CD14-positive monocyte (primary cell): ENCODE measurements at regions of chr14 and their contacts with region 1.

Region 1: DNA sequence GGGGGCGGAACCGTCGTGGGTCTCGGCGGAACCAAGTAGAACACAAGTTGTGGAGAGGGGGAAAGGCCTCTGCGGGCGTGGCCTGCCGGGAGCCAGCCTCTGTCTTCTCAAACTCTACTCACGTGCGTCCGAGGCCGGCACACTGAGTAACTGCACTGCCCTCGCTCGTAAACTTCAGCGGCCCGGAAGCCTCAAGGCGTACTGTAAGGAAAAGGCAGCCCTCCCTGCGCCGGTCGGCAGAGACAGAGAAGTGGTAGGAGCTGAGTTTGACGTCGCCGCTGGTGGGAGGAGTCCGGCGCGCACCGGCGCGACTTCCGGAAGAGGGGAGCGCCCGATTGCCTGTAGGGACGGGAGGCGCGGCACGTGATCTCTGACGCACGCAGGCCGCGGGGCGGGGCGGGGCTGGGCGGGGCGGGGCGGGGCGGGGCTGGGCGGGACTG is at the start of gene FBXO33:
- DNase-seq: peak; percentile 92 to 98 (median 97)
- H3K4me3 ChIP-seq: peak within 1 kb of the TSS; percentile 88 to 98 (median 96)
- H3K4me3 Mint-ChIP-seq: peak within 1 kb of the TSS; percentile 98 to 99
- H3K27ac ChIP-seq: peak within 1 kb of the TSS; percentile 96 to 100
- H3K27ac Mint-ChIP-seq: peak within 1 kb of the TSS; percentile 100
- H3K4me1 ChIP-seq: peaks cover 27 to 36% of the 10 kb centered on the region in 2 donors
- H3K4me1 Mint-ChIP-seq: peaks cover 45% of the 10 kb centered on the region
- H3K27me3 ChIP-seq: no peaks in the 10 kb centered on the region
- H3K27me3 Mint-ChIP-seq: peaks cover 0 to 1% (median 0%) of the 10 kb centered on the region in 3 donors
- CTCF ChIP-seq: no peak
- polyA plus RNA-seq, gene FBXO33: 9.0 to 14.8 (median 14.1) TPM

Region 2: GRCh38 chr14:39015360-39015961 is 416.7 kb before region 1 on chr14:
- intact Hi-C with region 1: no loop called
- DNase-seq: peak in 2 of 3 donors; percentile 29 to 34
- H3K4me3 ChIP-seq: no peak overlapping the region
- H3K4me3 Mint-ChIP-seq: no peak overlapping the region
- H3K27ac ChIP-seq: no peak overlapping the region
- H3K27ac Mint-ChIP-seq: no peak overlapping the region
- H3K4me1 ChIP-seq: no peaks in the 10 kb centered on the region
- H3K4me1 Mint-ChIP-seq: peaks cover 12% of the 10 kb centered on the region
- H3K27me3 ChIP-seq: no peaks in the 10 kb centered on the region
- H3K27me3 Mint-ChIP-seq: peaks cover 0 to 4% (median 0%) of the 10 kb centered on the region in 3 donors
- CTCF ChIP-seq: peak; percentile 89

Region 3: DNA sequence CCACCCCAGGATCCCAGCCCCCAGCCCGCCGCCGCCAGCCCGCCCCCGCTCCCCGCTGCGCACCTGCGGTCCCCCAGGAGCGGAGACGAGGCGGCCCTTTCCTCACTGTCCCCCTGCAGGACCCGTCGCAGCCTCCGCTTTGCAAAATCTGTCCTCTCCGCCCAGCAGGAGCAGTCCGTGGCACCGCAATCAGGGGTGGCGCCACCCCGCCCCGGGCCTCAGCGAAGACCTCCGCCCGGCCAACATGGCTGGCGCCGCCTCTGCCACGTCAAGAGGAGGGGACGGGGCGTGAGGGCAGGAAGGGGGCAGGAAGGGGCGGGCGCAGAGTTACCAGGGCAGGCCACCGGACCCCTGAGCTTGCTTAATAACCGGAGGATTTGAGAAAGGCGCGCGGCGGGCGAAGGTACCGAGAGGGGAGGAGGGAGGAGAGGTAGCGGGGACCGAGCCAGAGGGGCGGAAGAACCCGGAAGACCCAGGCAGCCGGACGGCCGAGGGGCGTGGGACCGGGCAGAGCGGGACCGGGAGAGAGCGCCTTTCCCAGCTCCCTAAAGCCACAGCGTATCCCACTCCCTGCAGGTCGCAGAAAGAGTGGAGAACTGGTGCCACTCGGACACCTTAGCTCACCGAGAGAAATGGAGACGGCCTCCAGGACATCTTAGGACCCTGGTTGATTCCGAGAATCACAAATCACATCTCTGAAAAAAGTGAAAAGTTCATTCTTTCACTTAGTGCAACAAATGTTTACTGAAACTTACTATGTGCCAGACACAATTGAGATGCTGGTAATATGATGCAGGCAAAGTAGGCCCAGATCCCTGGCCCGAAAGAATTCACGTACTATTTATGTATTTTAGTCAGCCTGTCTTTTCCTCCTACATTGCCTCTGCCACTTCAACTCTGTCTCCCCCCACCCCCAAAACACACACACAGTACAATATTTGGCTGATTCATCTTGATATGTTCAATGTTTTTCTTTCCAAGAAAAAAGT is 328.9 kb before region 1 on chr14 and contains the start of gene SEC23A:
- intact Hi-C with region 1: loop called (anchors 10 kb)
- DNase-seq: peak; percentile 70 to 82 (median 81)
- H3K4me3 ChIP-seq: peak within 1 kb of the TSS; percentile 83 to 93 (median 85)
- H3K4me3 Mint-ChIP-seq: peak within 1 kb of the TSS; percentile 93 to 94
- H3K27ac ChIP-seq: peak within 1 kb of the TSS; percentile 81 to 93
- H3K27ac Mint-ChIP-seq: peak within 1 kb of the TSS; percentile 87 to 95 (median 93)
- H3K4me1 ChIP-seq: peaks cover 11 to 18% of the 10 kb centered on the region in 2 donors
- H3K4me1 Mint-ChIP-seq: peaks cover 25% of the 10 kb centered on the region
- H3K27me3 ChIP-seq: no peaks in the 10 kb centered on the region
- H3K27me3 Mint-ChIP-seq: peaks cover 0 to 2% (median 0%) of the 10 kb centered on the region in 3 donors
- CTCF ChIP-seq: no peak
- polyA plus RNA-seq, gene SEC23A: 13.8 to 37.3 (median 36.4) TPM

Region 4: GRCh38 chr14:39266871-39267591 is 165.2 kb before region 1 on chr14:
- intact Hi-C with region 1: loop called in 1 of 2 experiments (anchors 2 kb)
- DNase-seq: peak; percentile 70 to 82 (median 75)
- H3K4me3 ChIP-seq: peak overlapping the region; percentile 91 to 98 (median 93)
- H3K4me3 Mint-ChIP-seq: peak overlapping the region; percentile 94 to 97
- H3K27ac ChIP-seq: peak overlapping the region; percentile 95 to 96
- H3K27ac Mint-ChIP-seq: peak overlapping the region; percentile 96 to 98 (median 97)
- H3K4me1 ChIP-seq: peaks cover 27 to 44% of the 10 kb centered on the region in 2 donors
- H3K4me1 Mint-ChIP-seq: peaks cover 48% of the 10 kb centered on the region
- H3K27me3 ChIP-seq: no peaks in the 10 kb centered on the region
- H3K27me3 Mint-ChIP-seq: no peaks in the 10 kb centered on the region
- CTCF ChIP-seq: no peak